ENCODE measurements at regions of chr11 and their contacts with region 1.

Region 1: DNA sequence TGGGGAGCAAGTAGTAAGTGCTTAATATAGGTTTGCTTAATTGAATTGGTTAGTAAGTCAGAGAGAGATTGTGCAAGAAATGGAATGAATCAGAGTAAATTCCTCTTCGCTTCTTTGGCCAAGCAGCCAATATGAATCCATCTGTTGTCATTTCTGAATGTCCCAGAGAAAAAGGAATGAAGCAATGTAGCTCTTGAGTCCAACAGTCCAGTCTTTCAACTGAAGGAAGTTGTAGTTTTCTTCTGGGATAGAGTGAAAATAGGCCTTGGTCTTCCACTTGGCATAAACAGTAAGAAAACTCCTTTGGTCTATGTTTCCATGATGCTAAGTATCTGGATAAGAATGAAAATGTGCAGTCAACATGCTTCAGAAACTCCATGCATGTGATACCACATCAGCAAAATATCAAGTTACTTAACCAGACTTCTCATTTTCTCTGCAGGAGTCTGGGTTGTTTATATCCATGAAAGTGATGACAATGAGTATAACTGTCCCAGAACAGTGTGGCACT is 1.8 kb upstream of the FIBIN start:
- DNase-seq: peak; percentile 88
- H3K4me3 ChIP-seq: no peak overlapping the region
- H3K27ac ChIP-seq: no peak overlapping the region
- H3K4me1 ChIP-seq: peaks cover 21% of the 10 kb centered on the region
- H3K27me3 ChIP-seq: no peaks in the 10 kb centered on the region
- CTCF ChIP-seq: no peak

Region 2: GRCh38 chr11:26931248-26931631 is 60.8 kb before region 1 on chr11:
- CTCF ChIA-PET with region 1: no interaction called
- dilution Hi-C with region 1: no loop called
- in situ Hi-C with region 1: no loop called
- intact Hi-C with region 1: no loop called
- DNase-seq: no peak
- H3K4me3 ChIP-seq: no peak overlapping the region
- H3K27ac ChIP-seq: no peak overlapping the region
- H3K4me1 ChIP-seq: no peaks in the 10 kb centered on the region
- H3K27me3 ChIP-seq: peaks cover 2% of the 10 kb centered on the region
- CTCF ChIP-seq: no peak

Region 3: DNA sequence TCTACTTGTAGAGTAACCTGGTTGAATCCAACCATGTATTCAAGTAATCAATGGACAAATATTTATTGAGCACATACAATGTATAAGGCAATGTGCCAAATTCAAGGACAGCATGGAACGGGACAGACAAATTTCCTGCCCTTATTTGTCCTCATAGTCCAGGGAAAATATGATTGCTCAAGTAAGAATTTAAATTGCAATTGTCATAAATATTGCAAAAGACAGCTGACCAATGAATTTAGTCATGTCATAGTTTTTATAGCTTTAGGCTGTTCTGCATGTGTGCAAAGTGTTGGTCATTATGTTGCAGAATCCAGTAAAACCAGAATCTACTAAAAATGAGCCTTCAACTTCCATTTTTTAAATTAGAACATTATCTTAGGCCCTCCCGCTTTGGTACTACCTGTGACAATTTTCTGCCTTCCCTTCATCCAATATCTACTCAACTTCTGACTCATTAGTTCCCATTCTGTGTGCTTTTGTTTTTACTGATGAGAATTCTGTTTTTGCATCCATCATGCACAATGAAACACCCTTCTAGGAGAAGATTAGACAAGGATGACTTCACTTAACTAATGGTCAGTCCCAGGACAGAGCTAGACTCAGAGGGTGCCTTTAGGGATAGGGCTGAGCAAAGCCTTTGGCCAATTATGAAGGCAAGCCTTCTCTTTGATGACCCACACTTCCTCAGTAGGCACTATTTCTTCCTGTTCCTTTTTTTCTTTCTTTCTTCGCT is 44.0 kb before region 1 on chr11:
- CTCF ChIA-PET with region 1: no interaction called
- dilution Hi-C with region 1: no loop called
- in situ Hi-C with region 1: no loop called
- intact Hi-C with region 1: loop called (anchors 1 kb)
- DNase-seq: peak; percentile 60
- H3K4me3 ChIP-seq: no peak overlapping the region
- H3K27ac ChIP-seq: peak overlapping the region; percentile 43
- H3K4me1 ChIP-seq: peaks cover 38% of the 10 kb centered on the region
- H3K27me3 ChIP-seq: no peaks in the 10 kb centered on the region
- CTCF ChIP-seq: no peak

Measured in mammary epithelial cell (primary cell).